Sciatic nerve (tissue), 2 donors: ENCODE measurements at regions of chr9 and their contacts with region 1.

Region 1: DNA sequence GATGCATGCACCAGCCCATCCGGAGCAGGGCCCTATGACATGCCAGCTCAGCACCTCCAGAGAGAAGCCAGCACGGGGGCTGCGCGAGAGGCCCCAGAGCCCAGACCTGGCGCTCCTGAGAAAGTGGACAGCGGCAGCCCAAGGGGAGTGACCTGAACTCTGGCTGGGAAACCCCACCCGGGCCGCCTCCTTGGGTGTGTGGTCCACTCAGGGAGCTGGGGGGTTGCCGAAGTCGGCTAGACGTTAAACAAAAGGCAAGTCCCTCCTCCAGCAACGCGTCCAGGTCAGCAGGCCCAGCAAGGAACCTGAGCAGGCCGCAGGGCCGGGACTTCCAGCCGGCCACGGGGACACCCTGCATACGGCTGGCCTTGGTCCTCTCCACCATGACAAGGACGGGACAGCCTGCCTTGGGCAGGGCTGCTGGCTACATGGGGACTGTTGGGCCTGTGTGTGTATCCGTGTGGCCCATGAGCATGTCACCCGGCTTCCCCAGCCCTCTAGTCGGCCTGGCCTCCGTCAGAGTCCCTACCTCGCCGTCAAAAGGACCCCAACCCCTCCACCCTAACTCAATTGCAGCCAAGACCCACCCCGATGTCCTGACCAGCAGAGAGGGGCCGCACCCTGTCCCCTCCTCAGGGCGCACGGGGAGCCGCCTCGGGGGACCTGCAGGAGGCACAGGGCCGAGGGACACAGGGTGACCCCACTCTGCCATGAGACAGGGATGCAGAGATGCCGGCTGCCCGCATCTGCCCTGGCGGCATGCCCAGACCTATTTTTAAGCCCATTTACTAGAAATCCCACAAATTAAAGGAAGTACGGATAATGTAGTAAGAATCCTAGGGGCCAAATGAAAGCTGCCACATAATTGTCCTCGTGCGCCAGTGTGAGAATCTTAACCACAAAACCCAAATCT is 35.5 kb downstream of the NACC2 start:
- DNase-seq: peak; percentile 43
- ATAC-seq: no peak

Region 2: GRCh38 chr9:135689011-135689410 is 370.6 kb before region 1 on chr9:
- intact Hi-C with region 1: loop called (anchors 5 kb)
- DNase-seq: no peak
- ATAC-seq: no peak

Region 3: GRCh38 chr9:135992486-135993408 is 66.8 kb before region 1 on chr9:
- intact Hi-C with region 1: no loop called
- DNase-seq: peak; percentile 89
- ATAC-seq: peak; percentile 85